Natural killer cell (primary cell): ENCODE measurements at regions of chr12 and their contacts with region 1.

Region 1: DNA sequence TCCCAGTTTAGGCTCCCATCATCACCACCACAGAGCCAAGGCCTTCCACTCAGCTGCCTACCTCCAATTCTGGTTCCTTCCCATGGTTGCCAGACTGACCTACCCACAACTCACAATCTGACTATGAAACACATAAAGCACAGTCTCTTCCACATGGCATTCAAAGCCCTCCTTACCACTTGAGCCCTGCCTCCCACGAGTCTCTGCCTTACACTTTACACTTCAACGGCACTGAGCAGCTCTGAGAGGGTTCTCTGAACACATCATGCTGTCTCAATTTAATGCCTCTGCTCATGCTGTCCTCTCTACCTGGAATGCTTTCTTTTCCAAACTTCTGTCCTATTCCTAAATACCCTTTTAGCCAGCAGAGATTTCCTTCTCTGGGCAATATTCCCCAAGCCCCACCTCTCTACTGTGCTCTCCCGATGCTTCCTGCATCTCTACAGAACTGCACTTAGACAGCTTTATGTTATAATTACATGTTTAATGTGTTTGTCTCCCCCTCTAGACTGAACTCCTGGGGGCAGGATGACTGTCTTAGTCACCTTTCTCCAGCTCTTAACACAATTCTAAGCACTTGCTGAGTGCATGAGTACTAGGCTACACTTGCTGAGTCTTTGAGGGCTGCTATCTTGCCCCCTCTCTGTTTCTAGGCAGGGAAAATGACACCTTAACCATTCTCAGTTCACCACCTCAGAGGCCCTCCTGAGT is 23.5 kb downstream of the FMNL3 start:
- DNase-seq: peak in 1 of 2 donors; percentile 26
- ATAC-seq: peak; percentile 84 to 98 (median 94)
- H3K4me3 ChIP-seq: no peak overlapping the region
- H3K4me3 Mint-ChIP-seq: peak overlapping the region; percentile 84
- H3K27ac ChIP-seq: peak overlapping the region; percentile 31
- H3K27ac Mint-ChIP-seq: peak overlapping the region; percentile 88 to 92
- H3K4me1 ChIP-seq: peaks cover 27% of the 10 kb centered on the region
- H3K4me1 Mint-ChIP-seq: peaks cover 55 to 59% of the 10 kb centered on the region in 2 donors
- H3K27me3 ChIP-seq: no peaks in the 10 kb centered on the region
- H3K27me3 Mint-ChIP-seq: no peaks in the 10 kb centered on the region
- CTCF ChIP-seq: no peak

Region 2: GRCh38 chr12:49621651-49622500 is 61.9 kb before region 1 on chr12:
- intact Hi-C with region 1: no loop called
- DNase-seq: no peak
- ATAC-seq: peak in 1 of 3 donors; percentile 26
- H3K4me3 ChIP-seq: peak overlapping the region; percentile 71
- H3K4me3 Mint-ChIP-seq: peak overlapping the region; percentile 84
- H3K27ac ChIP-seq: peak overlapping the region; percentile 66
- H3K27ac Mint-ChIP-seq: peak overlapping the region; percentile 72
- H3K4me1 ChIP-seq: peaks cover 22% of the 10 kb centered on the region
- H3K4me1 Mint-ChIP-seq: peaks cover 7 to 18% of the 10 kb centered on the region in 2 donors
- H3K27me3 ChIP-seq: peaks cover 6% of the 10 kb centered on the region
- H3K27me3 Mint-ChIP-seq: peaks cover 11 to 21% of the 10 kb centered on the region in 2 donors
- CTCF ChIP-seq: no peak

Region 3: GRCh38 chr12:49662998-49663843 is 20.5 kb before region 1 on chr12:
- intact Hi-C with region 1: loop called (anchors 2 kb)
- DNase-seq: peak; percentile 51 to 90
- ATAC-seq: peak; percentile 89 to 96 (median 91)
- H3K4me3 ChIP-seq: peak overlapping the region; percentile 1
- H3K4me3 Mint-ChIP-seq: peak overlapping the region; percentile 80
- H3K27ac ChIP-seq: peak overlapping the region; percentile 86
- H3K27ac Mint-ChIP-seq: peak overlapping the region; percentile 93 to 95
- H3K4me1 ChIP-seq: peaks cover 44% of the 10 kb centered on the region
- H3K4me1 Mint-ChIP-seq: peaks cover 60 to 70% of the 10 kb centered on the region in 2 donors
- H3K27me3 ChIP-seq: no peaks in the 10 kb centered on the region
- H3K27me3 Mint-ChIP-seq: no peaks in the 10 kb centered on the region
- CTCF ChIP-seq: no peak

Region 4: GRCh38 chr12:49671031-49671765 is 12.6 kb before region 1 on chr12:
- intact Hi-C with region 1: loop called (anchors 2 kb)
- DNase-seq: peak; percentile 48 to 87
- ATAC-seq: peak; percentile 73 to 84 (median 82)
- H3K4me3 ChIP-seq: no peak overlapping the region
- H3K4me3 Mint-ChIP-seq: peak overlapping the region; percentile 74
- H3K27ac ChIP-seq: peak overlapping the region; percentile 91
- H3K27ac Mint-ChIP-seq: peak overlapping the region; percentile 89 to 92
- H3K4me1 ChIP-seq: peaks cover 66% of the 10 kb centered on the region
- H3K4me1 Mint-ChIP-seq: peaks cover 82 to 97% of the 10 kb centered on the region in 2 donors
- H3K27me3 ChIP-seq: no peaks in the 10 kb centered on the region
- H3K27me3 Mint-ChIP-seq: no peaks in the 10 kb centered on the region
- CTCF ChIP-seq: no peak

Region 5: DNA sequence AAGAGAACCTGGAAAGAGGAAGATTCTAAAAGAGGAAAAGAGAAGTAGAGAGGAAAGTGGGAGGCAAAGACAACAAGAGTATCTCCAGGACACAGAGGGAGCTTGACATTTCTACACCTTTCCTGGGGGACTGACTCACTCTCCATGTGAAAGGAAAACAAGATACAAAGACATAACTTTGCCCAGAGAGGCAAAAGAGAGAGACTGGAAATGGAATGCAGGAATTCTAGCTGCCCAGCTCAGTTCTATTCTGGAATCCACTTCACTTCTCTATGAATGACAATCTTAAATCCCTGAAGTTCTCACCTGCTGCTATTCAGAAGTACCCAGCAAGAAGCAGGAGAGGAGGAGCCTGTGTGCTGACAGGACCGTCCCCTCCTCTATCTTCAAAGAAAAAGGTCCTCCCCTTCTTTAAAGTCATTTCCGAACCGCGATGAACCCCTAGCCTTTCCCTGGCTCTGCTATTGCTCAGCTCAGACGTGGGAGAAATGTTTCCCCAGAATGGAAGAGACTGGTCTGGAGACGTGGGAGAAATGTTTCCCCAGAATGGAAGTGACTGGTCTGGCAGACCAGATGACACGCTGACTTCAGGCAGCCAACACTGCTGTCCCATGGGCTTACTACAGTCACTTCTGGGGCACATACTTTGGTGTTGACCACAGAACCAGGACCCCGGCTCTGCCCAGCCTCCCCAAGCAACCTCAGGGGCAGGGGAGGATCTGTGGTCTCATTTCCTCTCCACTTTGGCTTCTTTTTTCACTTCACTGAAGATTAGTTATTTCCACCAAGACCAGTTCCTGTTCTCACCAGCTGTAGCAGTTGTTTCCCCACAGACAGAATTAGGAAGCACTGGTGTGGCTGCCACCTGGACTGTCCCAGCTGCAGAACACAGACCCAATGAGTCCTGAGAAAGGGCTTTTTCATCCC is 15.1 kb after region 1 on chr12:
- intact Hi-C with region 1: loop called (anchors 1 kb)
- DNase-seq: peak; percentile 45 to 62
- ATAC-seq: peak; percentile 58 to 81 (median 74)
- H3K4me3 ChIP-seq: peak overlapping the region; percentile 5
- H3K4me3 Mint-ChIP-seq: peak overlapping the region; percentile 91
- H3K27ac ChIP-seq: peak overlapping the region; percentile 70
- H3K27ac Mint-ChIP-seq: peak overlapping the region; percentile 95 to 96
- H3K4me1 ChIP-seq: peaks cover 37% of the 10 kb centered on the region
- H3K4me1 Mint-ChIP-seq: peaks cover 44 to 49% of the 10 kb centered on the region in 2 donors
- H3K27me3 ChIP-seq: no peaks in the 10 kb centered on the region
- H3K27me3 Mint-ChIP-seq: no peaks in the 10 kb centered on the region
- CTCF ChIP-seq: no peak